Gastrocnemius medialis (tissue), 4 donors: ENCODE measurements at regions of chr5 and their contacts with region 1.

Region 1: DNA sequence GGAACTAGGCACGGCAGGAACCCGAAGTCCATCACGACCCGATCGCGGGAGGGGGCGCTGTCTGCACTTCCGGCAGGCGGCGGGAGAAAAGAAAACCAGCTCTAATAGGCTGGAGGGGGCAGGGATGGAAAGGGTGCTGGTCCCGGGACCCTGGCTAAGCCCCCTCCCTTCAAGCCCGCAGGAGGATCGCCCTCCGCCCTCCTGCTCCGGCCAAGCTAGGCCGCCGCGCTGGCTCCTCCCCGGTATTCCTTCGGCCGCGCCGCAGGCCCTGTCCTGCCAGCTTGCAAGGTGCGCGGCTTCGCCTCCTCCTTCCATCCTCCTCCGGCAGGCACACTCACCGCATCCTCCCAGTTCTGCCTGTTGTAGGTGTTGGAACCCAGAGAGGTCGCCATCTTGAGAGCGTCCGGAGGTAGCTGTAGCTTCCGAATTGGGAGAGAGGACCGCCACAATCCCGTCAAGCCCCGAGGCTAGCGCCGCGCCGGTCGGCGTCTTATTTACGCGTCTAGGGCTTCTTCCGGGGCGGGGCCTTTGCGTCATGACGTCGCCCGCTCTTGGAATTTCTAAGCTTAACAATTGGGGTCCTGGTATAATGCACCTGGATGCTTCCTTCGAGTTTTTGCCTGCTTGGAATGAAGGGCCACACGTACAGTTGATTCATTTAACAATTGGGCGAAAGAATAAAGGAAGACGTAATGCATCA is at the start of gene RBM22:
- DNase-seq: peak; percentile 91 to 93
- ATAC-seq: peak; percentile 98
- H3K4me3 ChIP-seq: peak within 1 kb of the TSS; percentile 67 to 98 (median 98)
- H3K27ac ChIP-seq: peak within 1 kb of the TSS; percentile 89 to 99 (median 98)
- H3K4me1 ChIP-seq: peaks cover 13 to 14% of the 10 kb centered on the region in 2 donors
- H3K27me3 ChIP-seq: no peaks in the 10 kb centered on the region
- CTCF ChIP-seq: peak; percentile 52 to 84 (median 59)
- POLR2A ChIP-seq: peak; percentile 82 to 91
- total RNA-seq, gene RBM22: 22.5 to 31.0 (median 26.2) TPM

Region 2: DNA sequence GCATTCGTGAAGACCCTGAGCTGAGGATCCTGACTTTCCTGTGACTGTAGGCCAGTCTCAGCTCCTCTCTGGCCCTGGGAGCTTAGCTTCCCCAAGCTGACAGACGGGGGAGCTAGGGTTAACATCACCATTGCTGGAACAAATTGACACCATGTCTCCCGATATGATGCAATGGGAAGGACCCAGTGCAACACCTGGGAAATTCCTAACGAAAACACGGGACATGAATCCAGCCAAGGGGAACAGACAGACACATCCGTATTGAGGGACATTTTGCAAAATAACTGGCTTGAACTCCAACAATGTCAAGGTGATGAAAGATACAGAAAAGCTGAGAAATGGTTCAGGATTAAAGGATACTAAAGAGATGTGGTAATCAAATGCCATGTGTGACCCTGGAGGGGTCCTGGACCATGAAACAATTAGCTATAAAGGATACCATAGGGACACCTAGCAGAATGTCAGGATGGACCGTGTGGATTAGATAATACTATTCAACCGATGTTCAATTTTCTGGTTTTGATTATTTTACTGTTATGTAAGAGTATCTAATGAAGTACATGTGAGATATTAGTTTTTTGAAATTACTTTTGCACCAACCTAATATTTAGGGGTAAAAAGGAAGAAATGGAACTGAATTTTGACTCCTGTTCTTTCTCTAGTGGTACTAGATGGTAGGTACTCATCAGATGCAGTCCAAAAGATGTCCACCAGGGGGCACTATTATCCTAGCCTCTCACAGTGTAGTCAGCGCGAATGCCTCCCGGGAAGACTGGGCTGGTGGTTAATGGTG is 140.1 kb before region 1 on chr5:
- in situ Hi-C with region 1: loop called in 1 of 4 experiments (anchors 10 kb)
- intact Hi-C with region 1: no loop called
- DNase-seq: peak; percentile 78 to 81
- ATAC-seq: peak; percentile 86 to 89
- H3K4me3 ChIP-seq: no peak overlapping the region
- H3K27ac ChIP-seq: no peak overlapping the region
- H3K4me1 ChIP-seq: peaks cover 16 to 19% of the 10 kb centered on the region in 2 donors
- H3K27me3 ChIP-seq: no peaks in the 10 kb centered on the region
- CTCF ChIP-seq: peak; percentile 84 to 97 (median 94)
- POLR2A ChIP-seq: no peak

Region 3: GRCh38 chr5:150672237-150672883 is 28.4 kb before region 1 on chr5:
- in situ Hi-C with region 1: no loop called
- intact Hi-C with region 1: loop called (anchors 1 kb)
- DNase-seq: peak in 1 of 2 donors; percentile 49
- ATAC-seq: peak in 1 of 2 donors; percentile 15
- H3K4me3 ChIP-seq: peak overlapping the region; percentile 52 to 56 (median 56)
- H3K27ac ChIP-seq: peak overlapping the region; percentile 82 to 97 (median 92)
- H3K4me1 ChIP-seq: peaks cover 51 to 66% of the 10 kb centered on the region in 2 donors
- H3K27me3 ChIP-seq: no peaks in the 10 kb centered on the region
- CTCF ChIP-seq: no peak
- POLR2A ChIP-seq: no peak

Region 4: GRCh38 chr5:150740992-150741391 is 40.2 kb after region 1 on chr5:
- in situ Hi-C with region 1: no loop called
- intact Hi-C with region 1: no loop called
- DNase-seq: no peak
- ATAC-seq: no peak
- H3K4me3 ChIP-seq: no peak overlapping the region
- H3K27ac ChIP-seq: no peak overlapping the region
- H3K4me1 ChIP-seq: peaks cover 23 to 30% of the 10 kb centered on the region in 2 donors
- H3K27me3 ChIP-seq: no peaks in the 10 kb centered on the region
- CTCF ChIP-seq: no peak
- POLR2A ChIP-seq: no peak

Region 5: GRCh38 chr5:150778517-150779396 is 78.0 kb after region 1 on chr5 and contains the start of gene SMIM3:
- in situ Hi-C with region 1: no loop called
- intact Hi-C with region 1: loop called (anchors 2 kb)
- DNase-seq: peak in 1 of 2 donors; percentile 62
- ATAC-seq: peak; percentile 42 to 52
- H3K4me3 ChIP-seq: peak within 1 kb of the TSS; percentile 72 to 91 (median 78)
- H3K27ac ChIP-seq: peak within 1 kb of the TSS; percentile 81 to 87 (median 84)
- H3K4me1 ChIP-seq: peaks cover 21 to 27% of the 10 kb centered on the region in 2 donors
- H3K27me3 ChIP-seq: no peaks in the 10 kb centered on the region
- CTCF ChIP-seq: no peak
- POLR2A ChIP-seq: peak; percentile 54 to 78
- total RNA-seq, gene SMIM3: 14.2 to 17.9 (median 15.4) TPM